AG04450 (cell line): ENCODE measurements at regions of chr2 and their contacts with region 1.

Region 1: DNA sequence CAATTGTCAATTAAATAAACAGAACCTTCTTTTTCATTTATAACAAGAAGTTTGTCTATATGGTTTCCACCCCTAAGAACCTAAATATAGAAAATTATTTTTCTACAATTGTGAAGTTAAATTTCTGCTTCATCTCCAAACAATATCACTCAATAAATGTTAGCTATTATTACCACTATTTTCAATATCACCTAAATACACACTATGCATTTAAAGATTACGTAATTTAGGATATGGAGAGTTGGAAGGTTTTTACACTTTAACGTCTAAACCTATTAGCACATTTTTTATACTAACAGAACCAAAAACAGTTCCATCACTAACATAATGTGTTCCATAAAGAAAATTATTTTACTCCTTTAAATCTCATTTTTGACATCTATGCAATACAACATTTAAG is 48.0 kb downstream of the ROCK2 start:
- DNase-seq: no peak
- H3K4me3 ChIP-seq: no peak overlapping the region
- H3K27ac ChIP-seq: no peak overlapping the region
- H3K27me3 ChIP-seq: no peaks in the 10 kb centered on the region
- CTCF ChIP-seq: no peak

Region 2: DNA sequence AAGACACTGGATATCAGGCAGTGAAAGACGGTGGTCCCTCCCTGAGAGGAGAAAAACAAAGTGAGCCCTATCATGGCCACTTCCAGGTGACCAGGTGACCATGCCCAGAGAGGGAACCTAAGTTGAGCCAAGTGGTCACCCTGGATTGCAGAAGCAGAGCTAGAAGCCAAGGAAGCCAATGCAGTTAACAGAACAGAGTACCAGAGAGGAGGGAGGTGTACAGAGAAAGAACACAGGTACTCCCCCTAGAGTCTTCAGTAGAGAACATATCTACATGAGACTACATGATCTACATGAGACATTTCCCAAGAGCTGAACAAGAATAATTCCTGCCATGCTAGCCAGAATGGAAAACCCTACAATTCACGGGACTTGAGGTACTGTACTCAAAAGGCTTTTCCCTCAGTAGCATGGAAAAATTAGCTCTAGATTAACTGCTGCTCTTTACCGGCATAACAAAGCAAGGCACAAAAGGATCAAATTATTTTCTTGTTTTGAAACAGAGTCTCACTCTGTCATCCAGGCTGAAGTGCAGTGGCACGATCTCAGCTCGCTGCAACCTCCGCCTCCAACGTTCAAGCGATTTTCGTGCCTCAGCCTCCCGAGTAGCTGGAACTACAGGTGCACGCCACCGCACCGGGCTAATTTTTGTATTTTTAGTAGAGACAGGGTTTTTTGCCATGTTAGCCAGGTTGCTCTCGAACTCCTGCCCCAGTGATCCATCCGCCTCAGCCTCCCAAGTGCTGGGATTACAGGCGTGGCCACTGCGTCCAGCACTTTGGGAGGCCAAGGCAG is 24.5 kb after region 1 on chr2:
- CTCF ChIA-PET with region 1: no interaction called
- POLR2A ChIA-PET with region 1: no interaction called
- DNase-seq: no peak
- H3K4me3 ChIP-seq: no peak overlapping the region
- H3K27ac ChIP-seq: no peak overlapping the region
- H3K27me3 ChIP-seq: no peaks in the 10 kb centered on the region
- CTCF ChIP-seq: no peak; the same call in 1 of the 2 replicates

Region 3: GRCh38 chr2:11333427-11334183 is 37.2 kb after region 1 on chr2:
- CTCF ChIA-PET with region 1: no interaction called
- POLR2A ChIA-PET with region 1: no interaction called
- DNase-seq: no peak
- H3K4me3 ChIP-seq: no peak overlapping the region
- H3K27ac ChIP-seq: no peak overlapping the region
- H3K27me3 ChIP-seq: no peaks in the 10 kb centered on the region
- CTCF ChIP-seq: no peak

Region 4: DNA sequence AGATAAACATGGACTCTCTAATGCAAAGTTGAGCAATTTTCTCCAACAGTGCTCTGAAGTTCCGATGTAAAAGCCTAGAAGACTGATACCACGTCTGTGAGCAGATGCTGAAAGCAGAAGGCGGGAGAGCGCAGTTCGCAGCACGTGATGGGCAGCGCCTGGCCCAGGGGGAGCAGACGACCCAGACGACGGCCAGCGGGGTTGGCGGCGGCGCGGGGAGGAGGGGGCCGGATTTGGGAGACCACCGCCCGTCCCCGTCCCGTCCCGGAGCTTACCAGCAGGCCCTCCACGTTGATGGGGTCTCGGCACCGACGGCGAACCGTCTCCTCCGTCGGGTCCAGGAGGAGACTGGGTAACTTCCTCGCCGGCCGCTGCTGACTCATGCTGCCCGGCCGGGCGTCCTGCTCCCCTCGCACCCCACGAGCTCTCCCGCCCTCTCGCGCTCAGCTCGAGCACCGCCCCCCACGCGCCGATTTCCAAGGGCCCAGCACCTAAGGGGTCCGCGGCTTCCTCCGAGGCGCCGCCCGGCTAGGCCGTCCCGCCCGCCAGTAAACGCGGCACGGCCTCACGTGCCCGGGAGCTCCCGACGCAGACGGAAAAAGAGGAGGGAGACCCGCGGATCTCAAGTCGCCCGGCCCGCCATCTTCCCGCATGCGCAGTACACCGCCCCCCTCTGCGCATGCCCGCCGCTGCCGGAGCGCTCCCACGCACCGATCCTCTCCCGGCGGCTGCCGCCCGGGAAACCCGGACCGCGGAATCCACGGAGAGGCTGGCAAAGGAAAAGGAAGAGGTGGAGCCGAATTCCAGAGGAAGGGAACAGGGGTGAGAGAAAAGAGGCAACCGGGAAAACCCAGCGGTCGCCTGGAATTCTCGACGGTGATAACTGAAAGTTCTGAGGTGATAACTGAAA is 169.4 kb after region 1 on chr2 and contains the start of gene E2F6:
- CTCF ChIA-PET with region 1: no interaction called
- POLR2A ChIA-PET with region 1: interaction called, 11 read pairs
- DNase-seq: peak; percentile 81
- H3K4me3 ChIP-seq: peak within 1 kb of the TSS; percentile 72
- H3K27ac ChIP-seq: peak within 1 kb of the TSS; percentile 91
- H3K27me3 ChIP-seq: peaks cover 5% of the 10 kb centered on the region
- CTCF ChIP-seq: no peak
- polyA plus RNA-seq, gene E2F6: 12.0 and 17.9 TPM in 2 replicates